Gastrocnemius medialis (tissue), 4 donors: ENCODE measurements at regions of chr15 and their contacts with region 1.

Region 1: GRCh38 chr15:48963524-48964113 is at the start of gene SHC4:
- DNase-seq: peak; percentile 22 to 53
- ATAC-seq: peak; percentile 81 to 84
- H3K4me3 ChIP-seq: peak within 1 kb of the TSS; percentile 53 to 65 (median 60)
- H3K27ac ChIP-seq: peak within 1 kb of the TSS in 3 of 4 donors; percentile 47 to 64 (median 58)
- H3K4me1 ChIP-seq: peaks cover 4 to 24% of the 10 kb centered on the region in 2 donors
- H3K27me3 ChIP-seq: no peaks in the 10 kb centered on the region
- CTCF ChIP-seq: no peak
- POLR2A ChIP-seq: no peak
- total RNA-seq, gene SHC4: 0.29 to 0.39 TPM in 2 of 4 donors, not detected in the others

Region 2: DNA sequence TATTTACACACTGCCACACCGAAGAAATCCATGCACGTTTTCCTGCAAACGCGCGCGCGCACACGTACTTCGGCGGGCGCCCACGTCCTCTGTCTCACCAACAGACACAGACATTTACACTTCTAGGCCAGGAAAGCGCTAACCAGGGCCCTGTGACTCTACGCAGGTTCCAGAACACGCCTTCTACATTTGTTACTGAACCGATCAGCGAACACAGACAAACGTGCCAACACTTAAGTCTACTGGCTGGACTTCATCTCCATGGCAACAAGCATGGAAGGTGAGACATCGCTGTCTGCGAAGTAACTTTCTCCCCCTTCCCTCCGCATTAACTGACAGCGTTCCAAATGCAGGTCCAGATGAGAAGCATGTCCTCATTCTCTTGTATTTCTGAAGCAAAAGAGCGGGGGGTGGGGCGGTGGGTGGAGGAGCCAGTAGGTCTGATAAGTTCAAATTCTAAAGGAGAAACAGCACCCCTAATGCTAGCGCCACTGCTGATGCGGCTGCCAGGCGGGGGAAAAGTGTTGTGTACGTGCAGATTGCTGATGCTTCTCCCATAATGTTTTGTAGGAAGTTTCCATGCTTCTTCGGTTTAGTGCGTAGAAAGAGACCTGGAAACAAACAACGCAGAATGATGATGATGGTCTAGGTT is 771.9 kb before region 1 on chr15 and contains the start of gene CTXN2:
- in situ Hi-C with region 1: no loop called
- intact Hi-C with region 1: no loop called
- DNase-seq: no peak
- ATAC-seq: no peak
- H3K4me3 ChIP-seq: no peak within 1 kb of the TSS
- H3K27ac ChIP-seq: no peak within 1 kb of the TSS
- H3K4me1 ChIP-seq: no peaks in the 10 kb centered on the region
- H3K27me3 ChIP-seq: peaks cover 3 to 11% (median 4%) of the 10 kb centered on the region in 3 donors
- CTCF ChIP-seq: no peak
- POLR2A ChIP-seq: no peak
- total RNA-seq, gene CTXN2: not detected

Region 3: DNA sequence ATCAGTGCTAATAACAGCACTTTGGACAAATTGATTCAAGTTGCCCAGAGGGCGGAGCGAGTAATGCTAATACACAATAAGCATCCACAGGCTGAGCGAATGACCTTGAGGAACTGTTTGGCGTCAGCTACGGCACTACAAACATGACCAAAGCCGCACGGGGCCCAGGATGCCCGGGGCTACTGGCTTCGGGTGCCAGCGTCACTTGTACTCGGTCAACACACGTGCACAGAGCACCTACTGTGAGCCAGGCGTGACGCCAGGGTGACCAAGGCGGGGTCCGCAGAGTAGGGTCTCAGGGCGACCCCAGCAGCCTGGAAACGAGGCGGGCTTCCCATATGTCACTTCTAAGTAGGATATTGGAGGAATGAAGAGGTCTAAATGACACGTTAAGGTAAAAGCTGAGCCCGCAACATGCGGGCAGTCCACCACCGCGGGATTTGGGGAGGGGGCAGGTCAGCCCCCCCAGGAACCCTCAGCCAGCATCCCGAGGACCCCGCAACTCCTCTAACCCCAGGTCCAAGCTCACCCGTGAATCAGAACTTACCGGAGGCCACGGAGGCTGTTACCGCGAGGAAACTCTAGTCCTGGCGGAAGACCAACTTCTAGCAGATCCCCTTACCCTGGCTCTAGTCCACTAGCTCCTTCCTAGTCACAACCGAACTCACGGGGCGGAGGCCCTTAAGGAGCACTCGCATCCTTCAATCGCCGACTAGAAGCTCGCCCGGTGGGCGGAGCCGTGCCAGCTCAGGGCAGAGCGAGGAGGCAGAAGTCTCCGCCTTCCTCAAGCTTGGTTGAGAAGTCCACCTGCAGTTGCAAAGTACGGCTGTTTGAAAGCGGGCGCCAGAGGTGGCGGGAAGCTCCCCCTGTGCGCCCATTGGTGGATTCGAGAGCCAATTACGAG is 153.0 kb before region 1 on chr15 and contains the start of gene CEP152:
- in situ Hi-C with region 1: no loop called
- intact Hi-C with region 1: loop called (anchors 5 kb)
- DNase-seq: peak; percentile 97 to 99
- ATAC-seq: peak; percentile 99
- H3K4me3 ChIP-seq: peak within 1 kb of the TSS; percentile 67 to 88 (median 79)
- H3K27ac ChIP-seq: peak within 1 kb of the TSS; percentile 21 to 61 (median 48)
- H3K4me1 ChIP-seq: peaks cover 0 to 8% of the 10 kb centered on the region in 2 donors
- H3K27me3 ChIP-seq: no peaks in the 10 kb centered on the region
- CTCF ChIP-seq: no peak
- POLR2A ChIP-seq: peak in 1 of 2 donors; percentile 39
- total RNA-seq, gene CEP152: 0.51 to 2.4 (median 1.4) TPM

Region 4: DNA sequence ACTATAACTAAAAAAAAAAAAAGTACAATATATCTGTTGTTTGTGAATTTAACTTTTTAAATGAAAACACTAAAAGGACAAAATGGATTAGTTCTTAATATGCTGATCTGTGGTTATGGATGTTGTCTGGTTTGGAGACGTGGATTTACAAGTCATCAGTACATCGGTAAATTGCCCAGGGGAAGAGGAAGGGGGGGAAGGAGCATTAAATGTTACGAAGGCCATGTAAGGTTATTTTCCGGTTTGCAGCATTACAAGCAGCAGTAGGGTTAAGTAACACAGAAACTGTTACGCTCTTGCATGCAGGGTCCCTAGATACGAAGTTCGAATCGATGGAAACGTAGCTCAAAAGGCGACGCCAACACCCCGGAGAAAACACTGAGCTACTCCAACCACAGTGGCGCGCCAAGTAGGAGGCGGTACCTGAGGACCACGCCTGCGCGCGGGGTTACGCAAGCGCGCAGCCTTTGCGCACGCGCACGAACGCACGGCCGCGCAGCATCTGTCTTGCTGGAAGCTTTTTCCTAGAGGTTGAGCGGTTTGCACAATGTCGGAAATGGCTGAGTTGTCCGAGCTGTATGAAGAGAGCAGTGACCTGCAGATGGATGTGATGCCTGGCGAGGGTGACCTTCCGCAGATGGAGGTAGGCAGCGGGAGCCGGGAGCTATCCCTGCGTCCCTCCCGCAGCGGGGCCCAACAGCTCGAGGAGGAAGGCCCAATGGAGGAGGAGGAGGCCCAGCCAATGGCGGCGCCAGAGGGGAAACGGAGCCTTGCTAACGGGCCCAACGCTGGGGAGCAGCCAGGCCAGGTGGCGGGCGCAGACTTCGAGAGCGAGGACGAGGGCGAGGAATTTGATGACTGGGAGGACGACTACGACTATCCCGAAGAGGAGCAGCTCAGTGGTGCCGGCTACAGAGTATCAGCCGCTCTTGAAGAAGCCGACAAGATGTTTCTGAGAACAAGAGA is 85.7 kb before region 1 on chr15 and contains the start of gene EID1:
- in situ Hi-C with region 1: no loop called
- intact Hi-C with region 1: loop called (anchors 2 kb)
- DNase-seq: peak; percentile 79 to 89
- ATAC-seq: peak; percentile 98 to 99
- H3K4me3 ChIP-seq: peak within 1 kb of the TSS; percentile 74 to 87 (median 81)
- H3K27ac ChIP-seq: peak within 1 kb of the TSS; percentile 79 to 87 (median 83)
- H3K4me1 ChIP-seq: peaks cover 18 to 19% of the 10 kb centered on the region in 2 donors
- H3K27me3 ChIP-seq: no peaks in the 10 kb centered on the region
- CTCF ChIP-seq: no peak
- POLR2A ChIP-seq: peak; percentile 49 to 50
- total RNA-seq, gene EID1: 110 to 146 (median 135) TPM

Region 5: GRCh38 chr15:48888836-48889235 is 74.8 kb before region 1 on chr15:
- in situ Hi-C with region 1: no loop called
- intact Hi-C with region 1: no loop called
- DNase-seq: no peak
- ATAC-seq: no peak
- H3K4me3 ChIP-seq: no peak overlapping the region
- H3K27ac ChIP-seq: no peak overlapping the region
- H3K4me1 ChIP-seq: no peaks in the 10 kb centered on the region
- H3K27me3 ChIP-seq: no peaks in the 10 kb centered on the region
- CTCF ChIP-seq: no peak
- POLR2A ChIP-seq: no peak

Region 6: GRCh38 chr15:48975472-48976419 is 12.1 kb after region 1 on chr15:
- in situ Hi-C with region 1: no loop called
- intact Hi-C with region 1: loop called (anchors 1 kb)
- DNase-seq: peak; percentile 23 to 56
- ATAC-seq: peak; percentile 88 to 97
- H3K4me3 ChIP-seq: peak overlapping the region; percentile 56 to 85 (median 66)
- H3K27ac ChIP-seq: peak overlapping the region in 3 of 4 donors; percentile 12 to 63 (median 58)
- H3K4me1 ChIP-seq: peaks cover 0 to 4% of the 10 kb centered on the region in 2 donors
- H3K27me3 ChIP-seq: no peaks in the 10 kb centered on the region
- CTCF ChIP-seq: peak; percentile 77 to 94 (median 86)
- POLR2A ChIP-seq: no peak